Posterior cingulate gyrus (tissue), 11 donors: ENCODE measurements at regions of chr4 and their contacts with region 1.

Region 1: GRCh38 chr4:26076000-26076587 is 162.1 kb downstream of the SMIM20 start:
- DNase-seq: no peak

Region 2: GRCh38 chr4:25834411-25835107 is 241.5 kb before region 1 on chr4:
- intact Hi-C with region 1: no loop called
- DNase-seq: no peak

Region 3: GRCh38 chr4:25993395-25994185 is 82.5 kb before region 1 on chr4:
- intact Hi-C with region 1: loop called (anchors 5 kb)
- DNase-seq: no peak

Region 4: DNA sequence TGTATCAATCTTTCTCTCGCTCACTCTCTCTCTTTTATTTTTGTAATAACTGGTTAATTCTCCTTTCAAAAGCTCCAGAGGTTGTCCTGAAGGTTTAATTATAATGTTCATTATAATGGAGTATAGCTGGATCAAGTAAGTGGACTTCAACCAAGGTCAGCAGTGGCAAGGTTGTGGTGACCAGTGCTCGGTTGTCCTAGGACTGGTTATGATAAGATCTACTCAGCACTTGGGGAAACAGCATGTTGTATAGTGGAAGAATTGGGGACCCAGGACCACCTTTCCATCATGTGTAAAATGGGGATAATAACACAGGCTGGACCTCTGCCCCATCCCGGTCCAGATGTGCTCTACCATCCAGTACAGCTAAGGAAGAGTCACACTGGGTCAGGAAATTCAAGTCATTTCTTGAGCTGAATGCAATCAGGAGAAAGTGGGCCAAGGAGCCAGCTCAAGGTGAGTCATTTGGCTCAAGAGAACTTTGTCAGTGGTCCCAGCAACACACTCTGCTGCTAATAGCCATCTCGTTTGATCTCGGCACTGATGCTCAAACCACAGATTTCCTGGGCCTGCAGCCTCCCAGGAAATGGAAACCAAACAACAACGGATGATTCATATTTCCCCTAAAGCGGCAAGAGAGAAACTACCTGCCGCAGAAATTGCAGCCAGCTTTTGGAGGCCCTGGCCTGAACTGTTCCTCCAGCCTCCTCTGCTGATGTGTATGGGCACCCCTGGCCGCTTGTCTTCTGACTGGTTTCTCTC is 121.1 kb after region 1 on chr4:
- intact Hi-C with region 1: no loop called
- DNase-seq: no peak